Activated naive CD8-positive, alpha-beta T cell treated with anti-CD3 and anti-CD28 coated beads, Interleukin-2, amount 10 ng/mL, durations not matched to agents 7 days and 5 days (primary cell): ENCODE measurements at regions of chr11 and their contacts with region 1.

Region 1: DNA sequence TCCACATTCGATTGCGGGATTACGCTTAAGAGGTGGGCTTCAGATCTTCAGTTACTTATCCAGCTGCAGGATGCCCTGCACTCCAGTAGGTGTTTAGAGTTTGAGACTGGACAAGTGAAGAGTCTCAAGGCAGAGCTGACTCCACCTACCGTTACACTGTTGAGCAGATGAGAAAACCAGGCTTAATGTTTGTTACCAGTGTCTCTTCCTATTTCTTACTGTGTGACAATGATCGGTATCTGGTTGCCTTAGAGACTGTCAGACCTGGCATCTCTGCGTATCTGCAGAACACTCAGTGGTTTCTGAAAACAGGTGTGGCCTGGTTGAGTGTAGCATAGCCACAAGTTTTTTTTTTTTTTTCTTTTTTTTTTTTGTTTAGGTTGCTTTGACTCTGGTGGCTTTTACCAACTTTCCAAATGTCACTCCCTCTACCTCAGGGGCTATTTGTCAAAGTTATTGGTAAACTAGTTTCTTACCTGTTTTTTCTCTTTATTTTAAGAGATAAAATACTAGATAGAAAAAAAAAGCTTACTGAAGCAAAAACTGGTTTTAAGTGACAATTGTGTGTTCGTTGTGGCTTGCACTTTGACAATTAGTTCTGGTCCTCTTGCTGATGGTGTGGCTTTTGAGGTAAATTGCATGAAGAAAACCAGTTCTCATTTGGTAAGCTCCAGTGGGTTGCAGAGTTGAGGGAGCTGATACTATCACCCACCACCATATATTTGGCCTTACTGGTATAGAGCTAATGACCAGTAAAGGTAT is 284.8 kb downstream of the ETS1 start:
- DNase-seq: no peak
- ATAC-seq: peak; percentile 90
- H3K4me3 Mint-ChIP-seq: peak overlapping the region; percentile 91
- H3K27ac Mint-ChIP-seq: peak overlapping the region; percentile 96
- H3K4me1 Mint-ChIP-seq: peaks cover 66% of the 10 kb centered on the region
- H3K27me3 Mint-ChIP-seq: no peaks in the 10 kb centered on the region

Region 2: GRCh38 chr11:128279866-128280265 is 22.7 kb before region 1 on chr11:
- POLR2A ChIA-PET with region 1: no interaction called
- DNase-seq: no peak
- ATAC-seq: no peak
- H3K4me3 Mint-ChIP-seq: no peak overlapping the region
- H3K27ac Mint-ChIP-seq: no peak overlapping the region
- H3K4me1 Mint-ChIP-seq: peaks cover under 1% of the 10 kb centered on the region
- H3K27me3 Mint-ChIP-seq: peaks cover 11% of the 10 kb centered on the region

Region 3: DNA sequence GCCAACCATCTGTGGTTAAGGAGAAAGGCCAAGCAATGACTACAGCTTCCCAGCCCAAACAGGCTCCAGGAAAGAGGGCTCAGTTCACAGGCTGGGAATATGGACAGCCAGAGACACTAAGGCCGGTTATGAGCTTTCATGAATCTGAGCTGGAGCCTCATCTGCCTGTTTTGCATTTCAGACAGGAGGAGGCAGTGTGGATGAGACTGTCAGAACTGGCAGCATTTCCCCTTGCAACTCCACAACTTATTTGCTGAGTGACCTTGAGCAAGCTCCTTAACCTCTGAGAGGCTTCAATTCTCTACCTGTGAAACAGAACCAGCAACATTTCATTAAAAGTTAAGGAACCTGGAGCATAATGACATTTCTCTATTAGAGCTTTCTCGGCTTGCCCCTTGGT is 20.8 kb after region 1 on chr11:
- POLR2A ChIA-PET with region 1: interaction called, 66 read pairs
- DNase-seq: no peak
- ATAC-seq: peak; percentile 17
- H3K4me3 Mint-ChIP-seq: peak overlapping the region; percentile 84
- H3K27ac Mint-ChIP-seq: peak overlapping the region; percentile 98
- H3K4me1 Mint-ChIP-seq: peaks cover 79% of the 10 kb centered on the region
- H3K27me3 Mint-ChIP-seq: no peaks in the 10 kb centered on the region

Region 4: GRCh38 chr11:128463371-128463829 is 160.8 kb after region 1 on chr11:
- POLR2A ChIA-PET with region 1: interaction called, 62 read pairs
- DNase-seq: no peak
- ATAC-seq: no peak
- H3K4me3 Mint-ChIP-seq: peak overlapping the region; percentile 76
- H3K27ac Mint-ChIP-seq: peak overlapping the region; percentile 88
- H3K4me1 Mint-ChIP-seq: peaks cover 74% of the 10 kb centered on the region
- H3K27me3 Mint-ChIP-seq: no peaks in the 10 kb centered on the region

Region 5: GRCh38 chr11:128482512-128483191 is 180.0 kb after region 1 on chr11:
- POLR2A ChIA-PET with region 1: interaction called, 20 read pairs
- DNase-seq: no peak
- ATAC-seq: peak; percentile 61
- H3K4me3 Mint-ChIP-seq: peak overlapping the region; percentile 86
- H3K27ac Mint-ChIP-seq: peak overlapping the region; percentile 97
- H3K4me1 Mint-ChIP-seq: peaks cover 88% of the 10 kb centered on the region
- H3K27me3 Mint-ChIP-seq: no peaks in the 10 kb centered on the region

Region 6: GRCh38 chr11:128506999-128507611 is 204.5 kb after region 1 on chr11:
- POLR2A ChIA-PET with region 1: interaction called, 22 read pairs
- DNase-seq: no peak
- ATAC-seq: peak; percentile 3
- H3K4me3 Mint-ChIP-seq: peak overlapping the region; percentile 98
- H3K27ac Mint-ChIP-seq: peak overlapping the region; percentile 89
- H3K4me1 Mint-ChIP-seq: peaks cover 87% of the 10 kb centered on the region
- H3K27me3 Mint-ChIP-seq: no peaks in the 10 kb centered on the region

Region 7: GRCh38 chr11:128624269-128625175 is 321.9 kb after region 1 on chr11:
- POLR2A ChIA-PET with region 1: interaction called, 10 read pairs
- DNase-seq: peak; percentile 72
- ATAC-seq: peak; percentile 65
- H3K4me3 Mint-ChIP-seq: peak overlapping the region; percentile 77
- H3K27ac Mint-ChIP-seq: peak overlapping the region; percentile 92
- H3K4me1 Mint-ChIP-seq: peaks cover 69% of the 10 kb centered on the region
- H3K27me3 Mint-ChIP-seq: no peaks in the 10 kb centered on the region